Sciatic nerve (tissue), 2 donors: ENCODE measurements at regions of chrX and their contacts with region 1.

Region 1: GRCh38 chrX:50978920-50979682 is 68.6 kb downstream of the BMP15 start:
- DNase-seq: no peak
- ATAC-seq: no peak

Region 2: DNA sequence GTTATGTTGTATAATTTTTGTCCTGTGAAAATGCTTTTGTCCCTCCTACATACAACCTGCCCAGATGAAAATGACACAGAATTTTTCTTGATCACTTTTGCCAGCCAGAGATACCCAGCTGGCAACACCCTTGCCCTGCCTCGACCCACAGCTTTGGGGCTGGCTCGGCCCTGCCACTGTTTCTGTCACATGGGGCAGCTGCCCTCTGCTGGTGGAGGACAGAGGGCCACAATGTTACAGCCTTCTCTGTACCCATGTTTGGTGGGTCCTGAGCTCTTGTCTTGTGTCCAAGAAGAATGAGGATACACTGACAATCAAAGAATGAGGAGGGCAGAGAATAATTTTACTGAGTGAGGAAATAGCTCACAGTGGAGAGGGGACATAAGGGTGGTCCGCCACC is 37.5 kb before region 1 on chrX:
- intact Hi-C with region 1: no loop called
- DNase-seq: no peak
- ATAC-seq: no peak

Region 3: GRCh38 chrX:50967736-50968135 is 11.4 kb before region 1 on chrX:
- intact Hi-C with region 1: no loop called
- DNase-seq: no peak
- ATAC-seq: no peak

Region 4: DNA sequence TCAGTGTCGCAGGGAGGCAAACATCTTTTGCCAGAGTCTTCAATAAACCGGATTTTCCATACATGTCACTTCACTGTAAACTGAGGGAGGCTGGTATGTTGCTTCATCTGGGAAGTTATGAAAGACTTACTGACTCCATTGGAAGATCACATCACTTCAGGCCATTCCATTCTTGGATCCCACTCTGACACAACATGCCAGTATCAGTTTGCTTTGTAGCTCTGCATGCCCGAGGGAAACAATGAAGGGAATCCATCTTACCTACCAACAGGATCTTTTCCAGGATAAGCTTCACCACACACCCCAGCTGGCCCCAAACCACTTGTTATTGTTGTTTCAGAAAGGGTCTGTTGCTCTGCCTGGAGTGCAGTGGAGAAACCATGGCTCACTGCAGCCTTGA is 1616.7 kb after region 1 on chrX:
- intact Hi-C with region 1: loop called (anchors 5 kb)
- DNase-seq: no peak
- ATAC-seq: no peak